Activated B cell treated with CpG ODN at 0.5 μM for 24 hours (primary cell): ENCODE measurements at regions of chr6 and their contacts with region 1.

Region 1: GRCh38 chr6:125765944-125766343 is 16.5 kb downstream of the HEY2 start:
- DNase-seq: no peak
- ATAC-seq: no peak
- H3K4me3 Mint-ChIP-seq: no peak overlapping the region
- H3K27ac Mint-ChIP-seq: no peak overlapping the region
- H3K4me1 Mint-ChIP-seq: peaks cover 3% of the 10 kb centered on the region
- H3K27me3 Mint-ChIP-seq: peaks cover 24% of the 10 kb centered on the region
- CTCF ChIP-seq: no peak

Region 2: DNA sequence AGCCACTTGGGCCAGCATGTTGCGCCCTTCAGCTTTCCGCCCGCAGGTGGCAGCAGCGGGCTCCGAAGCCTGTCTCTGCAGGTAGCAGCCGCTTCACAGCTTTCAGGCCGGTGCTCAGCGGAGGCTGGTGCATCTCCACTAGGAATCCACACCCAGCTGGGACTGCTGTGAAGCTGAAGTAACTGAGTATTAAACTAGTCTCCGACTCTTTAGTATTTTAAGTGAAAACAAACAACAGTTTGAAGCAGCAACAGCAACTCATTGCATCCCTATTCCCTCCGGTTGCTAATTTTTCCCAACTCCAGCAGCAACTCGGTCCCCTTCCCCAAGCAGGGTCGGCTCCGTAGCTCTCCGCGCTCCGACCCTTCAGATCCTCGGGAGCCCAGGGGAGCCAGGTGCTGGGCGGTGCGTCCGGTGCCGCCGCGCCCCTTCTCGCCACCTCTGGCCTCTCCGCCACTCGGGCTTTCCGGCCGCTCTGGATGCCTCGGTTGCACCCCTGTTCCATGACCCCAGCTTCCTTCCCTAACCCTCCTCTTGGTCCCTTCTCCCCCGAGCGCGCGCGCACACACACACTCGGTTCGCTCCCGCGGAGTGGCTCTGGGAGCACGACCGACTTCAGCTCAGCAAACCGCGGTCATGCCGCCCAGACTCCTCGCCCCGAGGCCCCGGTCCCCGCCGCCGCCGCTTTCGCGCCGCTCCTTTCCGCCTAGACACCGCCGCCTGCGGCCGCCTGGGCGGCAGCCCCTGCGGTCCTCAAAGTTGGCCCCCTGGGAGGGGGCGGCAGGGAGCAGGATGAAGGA is 1963.0 kb before region 1 on chr6:
- CTCF ChIA-PET with region 1: no interaction called
- POLR2A ChIA-PET with region 1: no interaction called
- intact Hi-C with region 1: loop called (anchors 5 kb)
- DNase-seq: peak; percentile 41
- ATAC-seq: peak; percentile 90
- H3K4me3 Mint-ChIP-seq: peak overlapping the region; percentile 75
- H3K27ac Mint-ChIP-seq: no peak overlapping the region
- H3K4me1 Mint-ChIP-seq: peaks cover 17% of the 10 kb centered on the region
- H3K27me3 Mint-ChIP-seq: peaks cover 32% of the 10 kb centered on the region
- CTCF ChIP-seq: peak; percentile 45

Region 3: DNA sequence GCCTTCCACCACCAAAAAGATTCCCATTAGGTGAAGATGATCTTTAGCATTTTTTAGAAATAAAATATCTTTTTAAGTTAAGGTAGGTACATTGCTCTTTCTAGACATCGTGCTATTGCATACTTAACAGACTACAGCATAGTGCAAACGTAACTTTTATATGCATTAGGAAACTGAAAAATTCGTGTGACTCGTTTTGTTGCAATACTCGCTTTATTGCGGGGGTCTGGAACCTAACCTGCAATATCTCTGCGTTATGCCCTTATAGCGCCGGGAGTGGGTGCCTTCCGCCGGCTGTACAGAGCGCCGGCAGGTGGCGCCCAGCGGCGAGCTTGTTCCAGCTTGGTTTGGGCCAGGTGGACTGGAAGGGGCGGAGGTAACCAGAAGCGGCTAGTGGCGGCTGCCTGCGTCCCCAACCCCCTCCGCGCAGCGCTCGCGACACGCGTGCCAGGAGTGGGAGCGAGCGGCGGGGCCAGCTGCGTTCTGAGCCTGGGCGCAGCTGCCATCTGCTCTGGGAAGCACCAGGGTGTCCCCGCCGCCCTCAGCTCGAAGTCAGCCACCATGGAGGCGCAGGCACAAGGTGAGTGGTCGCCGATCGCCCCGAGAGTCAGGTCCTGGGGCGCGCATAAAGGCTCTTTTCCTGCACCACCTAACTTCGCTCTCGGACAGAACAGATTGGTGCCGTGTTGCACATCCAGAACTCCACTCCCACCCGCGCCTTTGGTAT is 612.4 kb before region 1 on chr6 and contains the start of gene TPD52L1:
- CTCF ChIA-PET with region 1: no interaction called
- POLR2A ChIA-PET with region 1: no interaction called
- intact Hi-C with region 1: loop called (anchors 5 kb)
- DNase-seq: peak; percentile 23
- ATAC-seq: peak; percentile 76
- H3K4me3 Mint-ChIP-seq: peak within 1 kb of the TSS; percentile 68
- H3K27ac Mint-ChIP-seq: no peak within 1 kb of the TSS
- H3K4me1 Mint-ChIP-seq: peaks cover 11% of the 10 kb centered on the region
- H3K27me3 Mint-ChIP-seq: peaks cover 31% of the 10 kb centered on the region
- CTCF ChIP-seq: no peak
- total RNA-seq, gene TPD52L1: not detected in 2 replicates

Region 4: GRCh38 chr6:125191916-125192609 is 573.9 kb before region 1 on chr6:
- CTCF ChIA-PET with region 1: no interaction called
- POLR2A ChIA-PET with region 1: no interaction called
- intact Hi-C with region 1: loop called (anchors 2 kb)
- DNase-seq: no peak
- ATAC-seq: peak; percentile 71
- H3K4me3 Mint-ChIP-seq: no peak overlapping the region
- H3K27ac Mint-ChIP-seq: no peak overlapping the region
- H3K4me1 Mint-ChIP-seq: no peaks in the 10 kb centered on the region
- H3K27me3 Mint-ChIP-seq: peaks cover 3% of the 10 kb centered on the region
- CTCF ChIP-seq: peak; percentile 51

Region 5: DNA sequence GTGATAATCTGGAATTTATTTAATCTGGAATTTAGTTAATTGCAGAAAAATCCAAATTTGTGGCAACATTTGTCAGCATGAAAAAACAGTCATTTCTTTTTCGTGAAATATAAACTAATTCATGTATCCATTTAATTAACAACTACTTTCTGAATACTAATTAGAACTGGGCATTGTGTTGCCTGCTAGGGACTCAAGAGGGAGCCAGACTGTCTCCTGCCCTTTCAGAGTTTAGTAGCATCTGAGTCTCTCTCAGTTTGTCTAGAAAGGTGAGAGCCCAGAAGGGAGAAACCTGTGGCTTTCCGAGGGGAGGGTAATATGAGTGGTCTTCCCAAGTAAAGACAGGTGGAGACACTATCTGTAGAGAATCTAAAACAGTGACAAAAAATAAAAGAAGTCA is 253.3 kb before region 1 on chr6:
- CTCF ChIA-PET with region 1: no interaction called
- POLR2A ChIA-PET with region 1: no interaction called
- intact Hi-C with region 1: loop called (anchors 5 kb)
- DNase-seq: no peak
- ATAC-seq: no peak
- H3K4me3 Mint-ChIP-seq: no peak overlapping the region
- H3K27ac Mint-ChIP-seq: no peak overlapping the region
- H3K4me1 Mint-ChIP-seq: no peaks in the 10 kb centered on the region
- H3K27me3 Mint-ChIP-seq: peaks cover 6% of the 10 kb centered on the region
- CTCF ChIP-seq: no peak

Region 6: DNA sequence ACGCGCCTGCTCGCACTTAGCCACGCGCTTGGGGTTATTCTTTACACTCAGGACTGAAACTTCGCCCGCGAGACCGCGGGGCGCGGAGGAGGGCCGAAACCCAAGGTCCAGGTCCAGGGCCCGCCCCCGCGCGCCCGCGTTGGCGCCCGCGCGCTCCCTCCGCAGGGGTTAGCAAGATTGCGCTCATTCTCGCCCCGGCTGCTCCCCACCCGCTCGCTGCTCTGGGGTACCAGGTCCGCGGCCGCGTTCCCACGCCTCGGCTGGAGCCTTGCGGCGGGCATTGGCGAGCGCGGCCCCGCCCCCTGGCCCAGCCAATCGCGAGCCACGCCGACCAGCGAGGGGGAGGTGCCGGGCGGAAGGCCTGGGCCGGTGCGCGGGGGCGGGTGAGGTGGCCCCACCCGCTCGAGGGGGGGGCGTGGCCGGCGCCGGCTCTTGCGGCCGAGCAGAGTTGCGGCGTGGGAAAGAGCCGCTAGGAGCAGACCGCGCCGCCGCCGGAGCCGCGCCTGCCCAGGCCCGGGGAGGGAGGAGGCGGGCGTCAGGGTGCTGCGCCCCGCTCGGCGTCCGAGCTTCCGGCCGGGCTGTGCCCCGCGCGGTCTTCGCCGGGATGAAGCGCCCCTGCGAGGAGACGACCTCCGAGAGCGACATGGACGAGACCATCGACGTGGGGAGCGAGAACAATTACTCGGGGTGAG is 16.6 kb before region 1 on chr6 and contains the start of gene HEY2:
- CTCF ChIA-PET with region 1: interaction called, 7 read pairs
- POLR2A ChIA-PET with region 1: no interaction called
- intact Hi-C with region 1: loop called (anchors 2 kb)
- DNase-seq: peak; percentile 92
- ATAC-seq: peak; percentile 91
- H3K4me3 Mint-ChIP-seq: peak within 1 kb of the TSS; percentile 81
- H3K27ac Mint-ChIP-seq: peak within 1 kb of the TSS; percentile 61
- H3K4me1 Mint-ChIP-seq: peaks cover 40% of the 10 kb centered on the region
- H3K27me3 Mint-ChIP-seq: peaks cover 46% of the 10 kb centered on the region
- CTCF ChIP-seq: no peak
- total RNA-seq, gene HEY2: not detected in 2 replicates

Region 7: DNA sequence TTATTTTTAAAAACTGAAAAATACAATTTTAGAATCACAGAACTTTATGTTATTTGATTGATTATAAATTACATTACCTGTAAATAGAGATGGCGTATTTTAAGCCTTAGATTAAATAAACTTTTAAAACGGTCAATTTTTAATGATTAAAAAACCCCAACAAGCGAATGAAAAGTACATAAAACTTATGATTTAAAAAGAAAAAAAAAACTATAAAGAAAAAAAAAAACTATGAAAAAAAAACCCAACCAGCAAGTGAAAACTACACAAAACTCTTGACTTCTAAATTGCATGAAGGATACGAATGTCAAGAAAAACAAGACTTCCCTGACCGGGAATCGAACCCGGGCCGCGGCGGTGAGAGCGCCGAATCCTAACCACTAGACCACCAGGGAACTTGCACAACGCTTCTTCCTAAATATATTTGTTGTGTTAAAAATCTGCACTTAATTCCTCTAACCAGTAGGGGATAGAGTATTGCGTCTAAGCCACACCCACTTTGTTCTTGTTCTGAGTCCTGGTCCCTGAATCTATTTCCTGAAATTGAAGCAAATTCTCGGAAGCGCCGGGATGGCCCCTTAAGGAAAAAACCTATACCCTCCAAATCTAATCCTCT is 14.1 kb after region 1 on chr6:
- CTCF ChIA-PET with region 1: no interaction called
- POLR2A ChIA-PET with region 1: no interaction called
- intact Hi-C with region 1: no loop called
- DNase-seq: peak; percentile 77
- ATAC-seq: peak; percentile 79
- H3K4me3 Mint-ChIP-seq: no peak overlapping the region
- H3K27ac Mint-ChIP-seq: no peak overlapping the region
- H3K4me1 Mint-ChIP-seq: peaks cover 4% of the 10 kb centered on the region
- H3K27me3 Mint-ChIP-seq: no peaks in the 10 kb centered on the region
- CTCF ChIP-seq: no peak